ENCODE measurements at regions of chr13 and their contacts with region 1.

Region 1: DNA sequence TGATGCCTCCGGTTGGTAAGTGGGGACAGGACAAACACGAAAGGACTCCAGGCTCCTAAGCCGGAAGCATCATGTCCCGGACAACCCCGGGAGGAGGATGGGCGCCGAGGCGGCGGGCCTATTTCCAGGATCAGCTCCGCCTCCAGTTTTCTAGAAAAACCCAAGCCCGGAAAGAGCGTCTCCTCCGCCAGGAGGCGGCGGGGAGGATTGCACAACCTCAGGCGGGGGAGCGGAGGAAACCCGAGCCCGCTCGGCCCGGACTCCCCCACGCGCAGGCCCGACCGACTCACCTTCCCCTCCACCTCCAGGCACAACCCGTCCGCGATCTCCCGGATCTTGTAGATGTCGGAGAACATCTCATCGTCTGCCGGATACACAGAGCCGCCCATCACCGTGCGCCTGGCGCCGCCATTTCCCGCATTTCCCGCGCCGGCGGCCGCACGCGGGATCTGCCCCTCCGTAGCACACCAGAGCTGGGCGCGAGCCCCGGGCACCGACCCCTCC is 509 bp downstream of the TPT1 start:
- DNase-seq: peak; percentile 85
- H3K4me3 ChIP-seq: peak overlapping the region; percentile 83
- H3K27ac ChIP-seq: peak overlapping the region; percentile 96
- H3K27me3 ChIP-seq: no peaks in the 10 kb centered on the region
- CTCF ChIP-seq: peak; percentile 53

Region 2: DNA sequence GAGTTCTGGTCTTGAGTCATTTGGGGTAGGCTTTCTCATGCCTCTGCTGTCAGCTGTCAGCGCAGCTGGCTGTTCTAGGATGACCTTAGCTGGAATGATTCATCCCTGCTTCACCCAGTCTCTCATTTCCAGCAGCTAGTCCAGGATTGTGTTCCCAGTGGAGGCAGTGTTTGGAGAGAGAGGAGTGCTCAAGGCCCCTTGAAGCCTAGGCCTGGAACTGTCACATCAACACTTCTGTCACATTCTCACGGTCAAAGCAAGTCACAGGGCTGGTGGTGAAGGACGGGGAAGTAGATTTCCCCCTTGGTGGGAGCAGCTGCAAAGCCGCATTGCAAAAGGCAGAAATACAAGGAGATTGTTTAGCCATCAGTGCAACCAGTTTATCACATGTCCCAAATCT is 14.7 kb before region 1 on chr13:
- CTCF ChIA-PET with region 1: interaction called, 4 read pairs
- POLR2A ChIA-PET with region 1: interaction called, 19 read pairs
- DNase-seq: peak; percentile 79
- H3K4me3 ChIP-seq: no peak overlapping the region
- H3K27ac ChIP-seq: peak overlapping the region; percentile 86
- H3K27me3 ChIP-seq: no peaks in the 10 kb centered on the region
- CTCF ChIP-seq: no peak

Region 3: GRCh38 chr13:45482571-45483173 is 142.2 kb after region 1 on chr13:
- CTCF ChIA-PET with region 1: no interaction called
- POLR2A ChIA-PET with region 1: no interaction called
- DNase-seq: no peak
- H3K4me3 ChIP-seq: no peak overlapping the region
- H3K27ac ChIP-seq: no peak overlapping the region
- H3K27me3 ChIP-seq: no peaks in the 10 kb centered on the region
- CTCF ChIP-seq: no peak

Measured in AG04450 (cell line).